Activated CD8-positive, alpha-beta T cell treated with anti-CD3 and anti-CD28 coated beads, Interleukin-2, amount 10 ng/mL, durations not matched to agents 7 days and 5 days (primary cell): ENCODE measurements at regions of chr2 and their contacts with region 1.

Region 1: DNA sequence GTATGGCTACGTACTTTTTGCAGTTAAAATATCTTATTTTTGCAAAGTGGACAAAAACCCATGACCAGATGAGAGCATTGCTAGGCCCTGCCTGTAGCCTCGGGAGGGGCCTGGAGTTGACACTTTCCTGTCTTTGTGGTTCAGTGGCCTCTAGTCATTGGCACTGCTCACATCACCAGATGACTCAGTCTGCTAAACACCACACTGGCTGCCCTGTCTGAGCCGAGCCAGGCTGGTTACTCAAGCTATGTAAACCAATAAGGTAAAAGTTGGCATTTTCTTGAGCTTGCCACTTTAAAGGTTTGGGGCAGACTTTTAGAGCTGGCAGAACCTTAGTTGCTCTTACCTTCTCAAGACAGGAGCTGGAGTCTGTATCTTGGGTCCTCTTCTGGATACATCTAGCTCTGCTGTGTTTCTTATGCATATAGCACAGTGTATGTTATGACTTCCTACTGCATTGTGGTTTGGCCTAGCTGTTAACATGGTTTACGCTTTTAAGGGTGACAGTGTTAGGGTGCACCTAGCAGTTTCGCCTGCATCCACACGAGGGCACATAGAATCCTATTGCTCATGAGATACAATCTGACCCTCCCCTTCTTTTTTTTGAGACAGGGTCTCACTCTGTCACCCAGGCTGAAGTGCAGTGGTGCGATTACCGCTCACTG is 76.4 kb downstream of the AP1S3 start:
- DNase-seq: peak; percentile 85
- ATAC-seq: peak; percentile 96
- H3K4me3 Mint-ChIP-seq: peak overlapping the region; percentile 50
- H3K27ac Mint-ChIP-seq: peak overlapping the region; percentile 91
- H3K4me1 Mint-ChIP-seq: peaks cover 33% of the 10 kb centered on the region
- H3K27me3 Mint-ChIP-seq: no peaks in the 10 kb centered on the region

Region 2: DNA sequence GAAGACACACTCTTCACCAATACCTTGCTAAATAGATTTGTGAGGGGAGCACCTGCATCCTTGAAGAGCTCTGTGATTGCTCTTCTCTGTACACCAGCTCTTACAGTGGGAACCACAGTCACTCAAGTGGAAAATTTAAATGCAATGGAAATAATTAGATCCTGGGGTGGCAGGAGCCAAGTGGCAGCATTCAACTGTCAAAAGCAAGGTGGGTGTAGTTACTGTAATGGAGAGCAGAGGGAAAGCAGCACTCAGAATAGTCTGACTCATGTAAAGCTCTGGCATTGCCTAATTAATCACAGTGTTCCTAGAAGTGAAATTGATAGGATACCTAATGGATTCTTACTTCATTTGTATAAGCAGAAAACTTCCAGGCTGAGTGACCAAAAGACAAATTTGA is 463.2 kb before region 1 on chr2:
- CTCF ChIA-PET with region 1: no interaction called
- POLR2A ChIA-PET with region 1: no interaction called
- DNase-seq: no peak
- ATAC-seq: no peak
- H3K4me3 Mint-ChIP-seq: no peak overlapping the region
- H3K27ac Mint-ChIP-seq: no peak overlapping the region
- H3K4me1 Mint-ChIP-seq: no peaks in the 10 kb centered on the region
- H3K27me3 Mint-ChIP-seq: no peaks in the 10 kb centered on the region

Region 3: DNA sequence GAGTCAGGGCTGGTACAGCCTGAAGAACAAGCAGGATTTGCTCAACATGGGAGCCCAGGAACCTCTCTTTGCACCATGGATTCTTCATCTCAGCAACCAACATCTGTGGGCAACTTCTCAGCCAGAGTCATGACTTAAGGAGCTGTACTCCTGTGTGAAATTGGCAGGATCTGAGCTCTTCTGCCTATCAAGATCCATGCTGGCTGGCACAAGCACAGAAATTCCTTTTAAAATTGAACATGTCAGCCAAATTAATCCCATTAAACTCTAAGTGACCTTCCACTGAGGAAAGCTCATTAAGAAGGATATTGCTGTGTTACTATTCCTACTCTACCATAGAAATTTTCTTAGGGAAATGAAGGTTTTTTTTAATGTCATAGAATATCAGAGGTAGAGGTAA is 48.3 kb before region 1 on chr2:
- CTCF ChIA-PET with region 1: no interaction called
- POLR2A ChIA-PET with region 1: no interaction called
- DNase-seq: no peak
- ATAC-seq: no peak
- H3K4me3 Mint-ChIP-seq: no peak overlapping the region
- H3K27ac Mint-ChIP-seq: no peak overlapping the region
- H3K4me1 Mint-ChIP-seq: no peaks in the 10 kb centered on the region
- H3K27me3 Mint-ChIP-seq: peaks cover 5% of the 10 kb centered on the region

Region 4: GRCh38 chr2:223727562-223727961 is 33.4 kb before region 1 on chr2:
- CTCF ChIA-PET with region 1: interaction called, 11 read pairs
- POLR2A ChIA-PET with region 1: no interaction called
- DNase-seq: peak; percentile 64
- ATAC-seq: peak; percentile 70
- H3K4me3 Mint-ChIP-seq: no peak overlapping the region
- H3K27ac Mint-ChIP-seq: no peak overlapping the region
- H3K4me1 Mint-ChIP-seq: no peaks in the 10 kb centered on the region
- H3K27me3 Mint-ChIP-seq: peaks cover 5% of the 10 kb centered on the region